Caco-2 (cell line): ENCODE measurements at regions of chr16 and their contacts with region 1.

Region 1: DNA sequence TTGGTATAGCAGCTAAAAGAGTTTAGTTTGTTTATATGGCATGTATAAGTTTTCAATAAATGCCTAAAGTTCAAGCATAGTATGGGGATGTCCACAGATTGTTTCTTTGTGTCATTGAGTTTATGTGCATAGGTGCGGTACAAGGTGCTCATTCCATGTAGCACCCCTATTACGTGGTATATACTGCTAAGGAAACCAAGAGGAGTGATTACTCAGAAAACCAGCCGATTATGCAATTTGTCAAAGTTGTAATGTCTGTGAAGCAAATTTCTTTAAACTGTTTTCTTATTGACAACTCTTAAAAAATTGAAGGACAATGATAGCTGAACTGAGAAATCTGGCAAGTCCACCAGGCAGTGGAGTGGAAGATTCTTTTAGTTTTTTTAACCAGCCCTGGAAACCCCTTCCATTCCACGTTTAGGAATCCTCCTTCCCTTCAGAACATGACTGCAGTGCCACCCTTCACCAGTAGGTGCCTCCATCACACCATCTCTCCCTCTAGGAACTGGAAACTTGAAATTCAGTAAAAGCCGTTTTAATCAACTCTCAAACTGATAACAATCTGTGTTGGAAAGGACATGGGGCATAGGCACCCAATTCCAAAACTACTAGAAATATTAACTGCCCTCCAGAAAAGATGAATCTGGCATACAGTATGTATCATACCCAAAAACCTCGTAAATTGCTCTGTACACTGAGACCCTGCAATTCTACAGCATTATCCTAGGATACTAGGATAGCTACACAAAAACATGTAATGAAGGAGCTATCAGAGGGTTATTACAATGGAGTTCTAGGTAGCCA is 43.5 kb downstream of the REXO5 start:
- DNase-seq: peak; percentile 58 to 78
- H3K4me3 ChIP-seq: no peak overlapping the region
- H3K4me3 Mint-ChIP-seq: no peak overlapping the region
- H3K27ac Mint-ChIP-seq: no peak overlapping the region
- H3K4me1 ChIP-seq: peaks cover 39% of the 10 kb centered on the region
- H3K4me1 Mint-ChIP-seq: peaks cover 14% of the 10 kb centered on the region
- H3K27me3 ChIP-seq: no peaks in the 10 kb centered on the region
- H3K27me3 Mint-ChIP-seq: no peaks in the 10 kb centered on the region
- CTCF ChIP-seq: peak; percentile 93 to 97

Region 2: GRCh38 chr16:20781697-20782096 is 68.1 kb before region 1 on chr16:
- CTCF ChIA-PET with region 1: no interaction called
- POLR2A ChIA-PET with region 1: no interaction called
- intact Hi-C with region 1: no loop called
- DNase-seq: no peak
- H3K4me3 ChIP-seq: no peak overlapping the region
- H3K4me3 Mint-ChIP-seq: no peak overlapping the region
- H3K27ac Mint-ChIP-seq: no peak overlapping the region
- H3K4me1 ChIP-seq: no peaks in the 10 kb centered on the region
- H3K4me1 Mint-ChIP-seq: no peaks in the 10 kb centered on the region
- H3K27me3 ChIP-seq: no peaks in the 10 kb centered on the region
- H3K27me3 Mint-ChIP-seq: no peaks in the 10 kb centered on the region
- CTCF ChIP-seq: no peak

Region 3: DNA sequence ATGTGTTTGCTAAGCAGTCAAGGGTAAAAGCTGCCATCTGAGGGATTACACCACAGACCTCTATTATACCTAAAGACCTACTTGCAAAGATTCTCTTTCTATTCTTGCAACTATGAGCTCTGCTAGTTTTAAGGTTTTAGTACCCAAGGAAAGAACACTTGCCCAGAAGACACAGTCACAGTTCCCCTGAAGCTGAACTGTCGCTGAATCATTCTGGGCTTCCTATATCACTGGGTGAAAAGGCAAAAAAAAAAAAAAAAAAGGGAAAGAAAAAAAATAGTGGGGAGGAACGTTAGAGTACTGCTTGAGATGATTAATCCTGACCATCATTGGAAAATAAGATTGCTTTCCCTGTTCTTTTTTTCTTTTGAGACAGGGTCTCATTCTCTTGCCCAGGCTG is 88.6 kb after region 1 on chr16:
- CTCF ChIA-PET with region 1: interaction called, 4 read pairs
- POLR2A ChIA-PET with region 1: interaction called, 3 read pairs
- intact Hi-C with region 1: loop called (anchors 5 kb)
- DNase-seq: no peak
- H3K4me3 ChIP-seq: no peak overlapping the region
- H3K4me3 Mint-ChIP-seq: no peak overlapping the region
- H3K27ac Mint-ChIP-seq: peak overlapping the region; percentile 80
- H3K4me1 ChIP-seq: peaks cover 47% of the 10 kb centered on the region
- H3K4me1 Mint-ChIP-seq: no peaks in the 10 kb centered on the region
- H3K27me3 ChIP-seq: no peaks in the 10 kb centered on the region
- H3K27me3 Mint-ChIP-seq: no peaks in the 10 kb centered on the region
- CTCF ChIP-seq: no peak

Region 4: GRCh38 chr16:20976576-20976975 is 126.8 kb after region 1 on chr16:
- CTCF ChIA-PET with region 1: no interaction called
- POLR2A ChIA-PET with region 1: no interaction called
- intact Hi-C with region 1: no loop called
- DNase-seq: no peak
- H3K4me3 ChIP-seq: no peak overlapping the region
- H3K4me3 Mint-ChIP-seq: no peak overlapping the region
- H3K27ac Mint-ChIP-seq: no peak overlapping the region
- H3K4me1 ChIP-seq: no peaks in the 10 kb centered on the region
- H3K4me1 Mint-ChIP-seq: no peaks in the 10 kb centered on the region
- H3K27me3 ChIP-seq: no peaks in the 10 kb centered on the region
- H3K27me3 Mint-ChIP-seq: no peaks in the 10 kb centered on the region
- CTCF ChIP-seq: no peak

Region 5: GRCh38 chr16:21001262-21001661 is 151.5 kb after region 1 on chr16:
- CTCF ChIA-PET with region 1: no interaction called
- POLR2A ChIA-PET with region 1: no interaction called
- intact Hi-C with region 1: loop called (anchors 5 kb)
- DNase-seq: peak in 1 of 2 experiments; percentile 24
- H3K4me3 ChIP-seq: no peak overlapping the region
- H3K4me3 Mint-ChIP-seq: no peak overlapping the region
- H3K27ac Mint-ChIP-seq: no peak overlapping the region
- H3K4me1 ChIP-seq: no peaks in the 10 kb centered on the region
- H3K4me1 Mint-ChIP-seq: no peaks in the 10 kb centered on the region
- H3K27me3 ChIP-seq: no peaks in the 10 kb centered on the region
- H3K27me3 Mint-ChIP-seq: peaks cover 8% of the 10 kb centered on the region
- CTCF ChIP-seq: peak in 1 of 2 experiments; percentile 22

Region 6: GRCh38 chr16:21101631-21102420 is 252.0 kb after region 1 on chr16:
- CTCF ChIA-PET with region 1: interaction called, 17 read pairs
- POLR2A ChIA-PET with region 1: no interaction called
- intact Hi-C with region 1: loop called (anchors 1 kb)
- DNase-seq: peak; percentile 45 to 51
- H3K4me3 ChIP-seq: no peak overlapping the region
- H3K4me3 Mint-ChIP-seq: no peak overlapping the region
- H3K27ac Mint-ChIP-seq: no peak overlapping the region
- H3K4me1 ChIP-seq: no peaks in the 10 kb centered on the region
- H3K4me1 Mint-ChIP-seq: no peaks in the 10 kb centered on the region
- H3K27me3 ChIP-seq: no peaks in the 10 kb centered on the region
- H3K27me3 Mint-ChIP-seq: peaks cover under 1% of the 10 kb centered on the region
- CTCF ChIP-seq: peak; percentile 42 to 78

Region 7: DNA sequence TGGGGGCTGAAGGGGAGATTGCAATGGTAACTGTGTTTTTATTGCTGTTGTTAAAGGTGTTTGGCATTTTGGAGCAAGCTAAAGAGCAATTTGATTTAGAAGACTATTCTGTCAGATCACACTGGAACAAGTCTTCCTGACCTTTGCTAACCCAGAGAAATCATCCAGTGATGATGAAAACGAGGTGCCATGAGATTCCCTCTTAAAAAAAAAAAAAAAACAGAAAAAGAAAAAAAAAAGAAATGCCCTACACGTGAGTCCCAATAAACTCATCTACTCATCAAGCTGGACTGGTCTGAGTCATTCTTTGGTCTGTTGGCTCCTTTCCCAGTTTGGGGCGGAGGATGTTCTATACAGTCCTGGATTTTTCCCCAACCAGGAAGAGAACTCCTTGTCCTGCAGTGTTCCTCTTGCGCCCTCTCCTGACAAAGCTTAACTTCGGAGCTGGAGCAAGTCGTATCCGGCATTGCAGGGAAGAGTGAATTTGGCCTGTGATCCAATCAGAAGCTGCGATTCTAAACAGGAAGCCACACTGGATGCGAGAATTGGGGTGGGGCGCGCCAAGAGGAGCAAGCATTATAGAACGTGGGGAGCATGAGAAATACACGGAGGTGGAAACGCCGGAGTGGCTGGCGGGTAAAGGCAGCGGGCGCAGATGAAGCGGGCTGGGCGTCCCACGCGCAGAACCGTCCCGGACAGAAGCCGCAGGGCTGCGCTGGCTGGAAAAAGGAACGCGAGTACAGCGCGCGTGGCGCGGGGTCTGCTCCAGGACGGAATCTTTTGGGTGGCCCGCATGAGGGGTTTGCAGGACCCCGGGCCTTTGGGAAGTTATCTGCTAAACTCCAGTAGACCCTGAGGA is 450.7 kb after region 1 on chr16:
- CTCF ChIA-PET with region 1: no interaction called
- POLR2A ChIA-PET with region 1: no interaction called
- intact Hi-C with region 1: loop called (anchors 5 kb)
- DNase-seq: peak; percentile 92 to 95
- H3K4me3 ChIP-seq: peak overlapping the region; percentile 65
- H3K4me3 Mint-ChIP-seq: peak overlapping the region; percentile 97
- H3K27ac Mint-ChIP-seq: peak overlapping the region; percentile 82
- H3K4me1 ChIP-seq: peaks cover 12% of the 10 kb centered on the region
- H3K4me1 Mint-ChIP-seq: peaks cover 8% of the 10 kb centered on the region
- H3K27me3 ChIP-seq: no peaks in the 10 kb centered on the region
- H3K27me3 Mint-ChIP-seq: no peaks in the 10 kb centered on the region
- CTCF ChIP-seq: peak; percentile 71 to 89